ENCODE measurements at regions of chr4 and their contacts with region 1.

Region 1: DNA sequence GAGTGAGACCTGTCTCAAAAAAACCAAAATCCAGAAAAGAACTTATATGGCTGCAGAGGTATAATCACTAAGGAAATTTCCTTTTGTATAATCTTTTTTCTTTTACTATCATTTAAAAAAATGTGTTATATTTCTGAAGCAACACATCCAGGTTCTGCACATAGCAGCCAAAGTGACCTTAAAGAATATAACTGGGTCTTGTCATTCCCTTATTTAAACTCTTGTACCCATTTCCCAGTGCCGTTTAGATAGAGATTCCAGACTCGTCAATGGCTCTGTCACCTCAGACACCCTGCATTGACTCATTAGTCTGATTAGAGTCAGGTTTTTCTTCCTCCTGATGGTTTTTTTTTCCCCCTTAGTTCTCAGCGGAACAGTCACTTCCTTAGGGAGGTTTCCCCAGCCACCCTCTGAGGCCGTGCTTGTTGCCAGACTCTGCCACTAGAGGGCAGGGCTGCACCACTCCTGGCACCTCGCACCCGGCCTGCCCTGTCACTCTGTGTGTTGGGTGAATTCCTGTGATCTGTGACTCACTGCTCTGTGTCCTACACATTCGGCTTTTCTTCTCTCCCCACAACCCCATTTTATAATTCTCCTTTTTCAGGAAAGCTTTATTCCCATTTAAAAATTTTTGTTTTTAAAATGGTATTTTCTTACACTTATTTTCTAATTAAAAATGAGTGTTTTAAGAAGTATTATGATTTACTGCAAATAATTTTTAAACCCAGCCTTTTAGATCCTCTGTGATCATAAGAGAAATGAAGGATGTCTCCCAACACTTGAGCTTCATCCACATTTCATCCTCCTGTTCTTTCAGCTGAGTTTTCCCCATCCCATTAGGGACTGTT is 32.1 kb downstream of the HTT start:
- DNase-seq: peak; percentile 97
- H3K4me3 ChIP-seq: no peak overlapping the region
- H3K27ac ChIP-seq: peak overlapping the region; percentile 66
- H3K4me1 ChIP-seq: peaks cover 38% of the 10 kb centered on the region
- H3K27me3 ChIP-seq: no peaks in the 10 kb centered on the region
- CTCF ChIP-seq: peak; percentile 95 to 99
- POLR2A ChIP-seq: no peak

Region 2: GRCh38 chr4:3122081-3122563 is 15.6 kb after region 1 on chr4:
- CTCF ChIA-PET with region 1: interaction called, 124 read pairs
- POLR2A ChIA-PET with region 1: no interaction called
- dilution Hi-C with region 1: no loop called
- intact Hi-C with region 1: loop called (anchors 1 kb)
- DNase-seq: peak; percentile 92
- H3K4me3 ChIP-seq: peak overlapping the region in 1 of 3 experiments; percentile 6
- H3K27ac ChIP-seq: peak overlapping the region; percentile 92
- H3K4me1 ChIP-seq: peaks cover 34% of the 10 kb centered on the region
- H3K27me3 ChIP-seq: no peaks in the 10 kb centered on the region
- CTCF ChIP-seq: no peak
- POLR2A ChIP-seq: peak; percentile 37

Region 3: DNA sequence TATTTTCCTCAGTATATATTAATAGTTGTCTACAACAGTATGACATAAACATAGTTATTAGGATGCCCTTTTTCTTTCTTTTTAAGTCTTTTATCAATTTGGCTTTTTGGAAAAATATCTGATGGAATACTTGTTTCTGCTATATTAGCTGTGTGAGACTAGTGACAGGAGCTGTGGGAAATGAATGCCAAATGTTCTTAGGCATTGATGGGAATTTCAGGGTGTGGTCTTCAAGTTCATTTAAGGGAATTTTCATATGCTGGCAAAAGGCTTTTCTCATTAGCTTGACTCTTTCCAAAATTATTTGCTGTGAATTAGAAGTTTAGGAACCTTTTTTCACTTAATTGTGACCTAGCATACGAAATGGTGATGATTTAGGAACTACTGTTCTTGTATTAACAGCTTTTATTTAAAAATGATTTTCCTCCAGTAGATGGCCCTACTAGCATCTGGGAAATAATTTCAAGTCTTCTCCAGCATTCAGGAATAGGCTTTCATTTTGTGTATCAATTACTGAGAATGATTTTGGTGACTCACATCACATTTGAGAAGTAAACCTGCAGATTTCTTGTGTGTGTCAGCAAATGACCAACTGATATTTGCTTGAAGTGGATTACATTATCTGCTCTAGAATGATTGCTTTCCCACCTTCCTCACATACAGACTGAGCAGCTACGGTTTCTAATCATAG is 38.8 kb after region 1 on chr4:
- CTCF ChIA-PET with region 1: interaction called, 24 read pairs
- POLR2A ChIA-PET with region 1: no interaction called
- dilution Hi-C with region 1: no loop called
- intact Hi-C with region 1: no loop called
- DNase-seq: peak; percentile 25
- H3K4me3 ChIP-seq: no peak overlapping the region
- H3K27ac ChIP-seq: no peak overlapping the region
- H3K4me1 ChIP-seq: no peaks in the 10 kb centered on the region
- H3K27me3 ChIP-seq: no peaks in the 10 kb centered on the region
- CTCF ChIP-seq: no peak
- POLR2A ChIP-seq: no peak

Region 4: GRCh38 chr4:3292571-3293400 is 186.2 kb after region 1 on chr4 and contains the start of gene RGS12:
- CTCF ChIA-PET with region 1: no interaction called
- POLR2A ChIA-PET with region 1: no interaction called
- dilution Hi-C with region 1: no loop called
- intact Hi-C with region 1: loop called (anchors 1 kb)
- DNase-seq: peak; percentile 91
- H3K4me3 ChIP-seq: peak within 1 kb of the TSS; percentile 70 to 76 (median 75)
- H3K27ac ChIP-seq: peak within 1 kb of the TSS; percentile 78
- H3K4me1 ChIP-seq: peaks cover 18% of the 10 kb centered on the region
- H3K27me3 ChIP-seq: no peaks in the 10 kb centered on the region
- CTCF ChIP-seq: no peak
- POLR2A ChIP-seq: peak; percentile 70
- total RNA-seq, gene RGS12: 75.4 and 78.0 TPM in 2 replicates

Region 5: DNA sequence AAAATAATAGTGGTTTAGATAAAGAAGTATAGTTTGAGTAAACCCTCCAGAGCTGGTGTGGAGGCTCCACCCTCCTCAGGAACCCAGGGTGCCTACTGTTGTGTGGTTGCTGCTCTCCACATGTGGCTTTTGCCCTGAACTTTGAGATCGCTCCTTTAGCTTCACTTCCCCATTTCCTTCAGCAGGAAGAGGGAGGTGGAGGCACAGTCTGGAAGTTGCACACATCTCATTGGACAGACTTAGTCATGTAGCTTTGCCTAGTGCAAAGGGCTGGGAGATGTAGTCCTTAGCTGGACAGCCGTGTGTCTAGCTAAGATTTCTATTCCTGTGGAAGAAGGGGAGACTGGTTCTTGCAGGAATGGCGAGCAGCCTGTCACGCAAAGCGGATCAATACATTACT is 224.1 kb after region 1 on chr4:
- CTCF ChIA-PET with region 1: no interaction called
- POLR2A ChIA-PET with region 1: no interaction called
- dilution Hi-C with region 1: no loop called
- intact Hi-C with region 1: loop called (anchors 5 kb)
- DNase-seq: peak; percentile 75
- H3K4me3 ChIP-seq: peak overlapping the region in 1 of 3 experiments; percentile 7
- H3K27ac ChIP-seq: peak overlapping the region; percentile 14
- H3K4me1 ChIP-seq: peaks cover 38% of the 10 kb centered on the region
- H3K27me3 ChIP-seq: no peaks in the 10 kb centered on the region
- CTCF ChIP-seq: no peak
- POLR2A ChIP-seq: no peak

Region 6: GRCh38 chr4:4969298-4969697 is 1862.7 kb after region 1 on chr4:
- CTCF ChIA-PET with region 1: no interaction called
- POLR2A ChIA-PET with region 1: no interaction called
- dilution Hi-C with region 1: no loop called
- intact Hi-C with region 1: no loop called
- DNase-seq: no peak
- H3K4me3 ChIP-seq: no peak overlapping the region
- H3K27ac ChIP-seq: no peak overlapping the region
- H3K4me1 ChIP-seq: no peaks in the 10 kb centered on the region
- H3K27me3 ChIP-seq: no peaks in the 10 kb centered on the region
- CTCF ChIP-seq: no peak
- POLR2A ChIP-seq: no peak